ENCODE measurements at regions of chr9 and their contacts with region 1.

Region 1: DNA sequence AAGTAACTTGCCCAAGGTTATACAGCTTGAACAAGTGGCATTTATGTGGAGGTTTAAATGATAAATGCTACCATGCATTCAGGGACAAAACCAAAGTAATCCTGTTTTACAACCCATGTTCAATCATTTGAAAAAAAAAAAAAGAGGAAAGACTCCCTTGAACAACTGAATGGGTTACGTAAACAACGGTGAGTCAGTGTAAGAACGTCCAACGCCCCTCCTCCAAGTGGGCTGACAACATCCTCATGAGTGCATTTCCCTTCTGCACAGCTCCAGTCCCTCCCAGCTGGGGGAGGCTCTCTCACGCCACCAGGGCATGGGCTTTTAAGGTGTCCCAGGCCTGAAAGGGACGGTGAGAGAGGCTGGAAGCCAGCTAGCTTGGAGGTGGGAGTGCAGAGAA is 90.0 kb downstream of the PRRT1B start:
- DNase-seq: peak; percentile 97
- H3K4me3 Mint-ChIP-seq: no peak overlapping the region
- H3K27ac Mint-ChIP-seq: peak overlapping the region; percentile 77
- H3K4me1 Mint-ChIP-seq: peaks cover 30% of the 10 kb centered on the region
- H3K27me3 Mint-ChIP-seq: no peaks in the 10 kb centered on the region
- CTCF ChIP-seq: no peak

Region 2: GRCh38 chr9:131580263-131580662 is 55.0 kb before region 1 on chr9:
- CTCF ChIA-PET with region 1: no interaction called
- POLR2A ChIA-PET with region 1: no interaction called
- intact Hi-C with region 1: no loop called
- DNase-seq: no peak
- H3K4me3 Mint-ChIP-seq: no peak overlapping the region
- H3K27ac Mint-ChIP-seq: no peak overlapping the region
- H3K4me1 Mint-ChIP-seq: no peaks in the 10 kb centered on the region
- H3K27me3 Mint-ChIP-seq: no peaks in the 10 kb centered on the region
- CTCF ChIP-seq: no peak

Region 3: DNA sequence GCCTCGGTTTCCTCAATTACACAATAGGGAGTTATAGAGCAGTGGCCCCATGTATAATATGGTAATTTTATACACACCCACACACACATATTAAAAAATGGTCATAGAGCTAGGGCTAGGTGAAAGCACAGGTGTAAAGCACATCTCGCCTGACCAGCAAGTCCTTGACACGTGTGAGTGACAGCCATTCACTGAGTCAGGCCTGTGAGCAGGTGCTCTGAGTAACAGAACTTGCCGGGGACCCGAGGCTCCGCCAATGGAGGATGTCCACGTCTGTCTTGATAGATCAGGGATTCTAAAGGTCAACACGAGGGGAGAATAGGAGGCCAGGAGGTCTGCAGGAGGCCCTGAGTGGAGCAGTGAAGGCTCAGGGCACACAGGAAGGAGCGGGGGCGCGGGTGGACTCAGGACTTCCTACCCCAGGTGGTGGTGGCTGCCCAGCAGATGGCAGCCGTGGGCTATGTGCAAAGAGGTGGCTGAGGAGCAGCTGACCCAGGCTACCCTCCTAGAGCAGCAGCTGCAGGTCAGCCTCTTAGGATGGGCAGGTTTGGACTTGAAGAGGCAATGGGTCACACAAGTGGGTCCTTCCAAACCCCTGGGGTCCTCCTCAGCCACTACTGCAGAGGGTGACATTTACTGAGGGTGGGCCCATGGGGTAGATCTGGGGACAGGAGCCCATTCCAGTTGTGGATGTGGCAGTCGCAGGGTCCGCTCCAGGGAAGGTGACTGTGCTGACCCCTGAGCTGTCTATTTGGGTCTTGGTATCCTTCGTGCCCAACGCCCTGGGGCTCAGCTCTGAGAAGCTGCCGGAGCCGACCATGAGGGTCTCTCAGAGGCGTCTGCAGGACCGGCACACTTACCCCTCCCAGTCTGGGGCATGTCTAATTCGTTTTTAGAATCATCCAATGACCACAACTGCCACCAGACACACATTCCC is 44.1 kb before region 1 on chr9:
- CTCF ChIA-PET with region 1: interaction called, 4 read pairs
- POLR2A ChIA-PET with region 1: no interaction called
- intact Hi-C with region 1: loop called (anchors 5 kb)
- DNase-seq: peak; percentile 77
- H3K4me3 Mint-ChIP-seq: no peak overlapping the region
- H3K27ac Mint-ChIP-seq: no peak overlapping the region
- H3K4me1 Mint-ChIP-seq: peaks cover 4% of the 10 kb centered on the region
- H3K27me3 Mint-ChIP-seq: no peaks in the 10 kb centered on the region
- CTCF ChIP-seq: peak; percentile 80

Region 4: GRCh38 chr9:131608493-131609037 is 26.7 kb before region 1 on chr9:
- CTCF ChIA-PET with region 1: interaction called, 3 read pairs
- POLR2A ChIA-PET with region 1: interaction called, 44 read pairs
- intact Hi-C with region 1: loop called (anchors 2 kb)
- DNase-seq: peak; percentile 84
- H3K4me3 Mint-ChIP-seq: peak overlapping the region; percentile 54
- H3K27ac Mint-ChIP-seq: peak overlapping the region; percentile 73
- H3K4me1 Mint-ChIP-seq: peaks cover 29% of the 10 kb centered on the region
- H3K27me3 Mint-ChIP-seq: no peaks in the 10 kb centered on the region
- CTCF ChIP-seq: no peak

Region 5: GRCh38 chr9:131650254-131650653 is 15.0 kb after region 1 on chr9:
- CTCF ChIA-PET with region 1: interaction called, 4 read pairs
- POLR2A ChIA-PET with region 1: interaction called, 27 read pairs
- intact Hi-C with region 1: loop called (anchors 1 kb)
- DNase-seq: peak; percentile 83
- H3K4me3 Mint-ChIP-seq: peak overlapping the region; percentile 71
- H3K27ac Mint-ChIP-seq: peak overlapping the region; percentile 99
- H3K4me1 Mint-ChIP-seq: peaks cover 26% of the 10 kb centered on the region
- H3K27me3 Mint-ChIP-seq: no peaks in the 10 kb centered on the region
- CTCF ChIP-seq: no peak

Region 6: GRCh38 chr9:131656356-131657036 is 21.2 kb after region 1 on chr9:
- CTCF ChIA-PET with region 1: no interaction called
- POLR2A ChIA-PET with region 1: interaction called, 17 read pairs
- intact Hi-C with region 1: no loop called
- DNase-seq: no peak
- H3K4me3 Mint-ChIP-seq: no peak overlapping the region
- H3K27ac Mint-ChIP-seq: peak overlapping the region; percentile 7
- H3K4me1 Mint-ChIP-seq: peaks cover 36% of the 10 kb centered on the region
- H3K27me3 Mint-ChIP-seq: no peaks in the 10 kb centered on the region
- CTCF ChIP-seq: no peak

Region 7: GRCh38 chr9:131709771-131710454 is 74.6 kb after region 1 on chr9:
- CTCF ChIA-PET with region 1: interaction called, 7 read pairs
- POLR2A ChIA-PET with region 1: interaction called, 9 read pairs
- intact Hi-C with region 1: loop called (anchors 5 kb)
- DNase-seq: peak; percentile 17
- H3K4me3 Mint-ChIP-seq: no peak overlapping the region
- H3K27ac Mint-ChIP-seq: peak overlapping the region; percentile 67
- H3K4me1 Mint-ChIP-seq: peaks cover 38% of the 10 kb centered on the region
- H3K27me3 Mint-ChIP-seq: no peaks in the 10 kb centered on the region
- CTCF ChIP-seq: no peak

Measured in MCF 10A (cell line).